ENCODE measurements at regions of chr12 and their contacts with region 1.

Region 1: GRCh38 chr12:21697904-21698630 is 40.4 kb upstream of the LDHB start:
- DNase-seq: peak; percentile 37
- ATAC-seq: no peak
- H3K4me3 ChIP-seq: no peak overlapping the region
- H3K4me3 Mint-ChIP-seq: no peak overlapping the region
- H3K27ac ChIP-seq: no peak overlapping the region
- H3K27ac Mint-ChIP-seq: no peak overlapping the region
- H3K4me1 ChIP-seq: no peaks in the 10 kb centered on the region
- H3K4me1 Mint-ChIP-seq: no peaks in the 10 kb centered on the region
- H3K27me3 ChIP-seq: no peaks in the 10 kb centered on the region
- H3K27me3 Mint-ChIP-seq: peaks cover 3% of the 10 kb centered on the region
- CTCF ChIP-seq: peak; percentile 77

Region 2: DNA sequence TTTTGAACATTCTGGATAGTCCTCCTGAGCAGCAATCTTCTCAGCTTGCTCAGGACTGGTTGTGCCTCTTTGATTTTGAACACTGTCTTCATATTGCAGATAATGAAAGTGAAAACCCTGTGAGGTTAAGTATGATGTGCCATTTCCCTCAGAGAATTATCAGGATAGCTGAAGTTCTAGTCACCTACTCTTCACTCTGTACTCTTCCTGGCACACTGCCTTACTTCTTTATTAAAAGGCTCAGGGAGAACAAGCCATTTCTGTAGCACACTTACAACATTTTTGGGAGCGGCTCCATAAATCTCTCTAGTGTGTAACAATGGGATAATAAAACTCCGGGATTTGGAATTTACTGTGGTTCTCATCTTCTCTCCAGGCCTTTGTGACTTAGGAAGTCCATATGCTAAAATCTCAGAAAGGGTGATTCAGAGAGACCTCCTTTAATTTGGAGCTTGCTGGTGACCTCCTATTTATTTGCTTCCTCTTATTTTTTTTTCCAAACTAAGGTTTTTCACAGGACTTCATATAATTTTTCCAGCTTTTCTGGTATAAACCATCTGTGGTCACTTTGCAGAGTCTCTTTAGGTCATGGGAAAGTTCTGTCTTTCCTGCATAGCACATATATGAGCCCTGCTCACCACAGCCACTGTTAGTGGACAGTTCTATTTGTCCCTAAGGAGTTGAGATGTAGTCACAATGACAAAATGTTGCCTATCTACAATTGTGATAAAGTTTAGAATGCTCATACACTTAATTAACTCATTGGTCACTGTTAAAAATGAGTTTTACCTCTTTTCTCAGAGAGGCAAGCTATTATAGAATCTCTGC is 13.1 kb after region 1 on chr12:
- CTCF ChIA-PET with region 1: interaction called, 11 read pairs
- POLR2A ChIA-PET with region 1: no interaction called
- intact Hi-C with region 1: no loop called
- DNase-seq: no peak
- ATAC-seq: no peak
- H3K4me3 ChIP-seq: no peak overlapping the region
- H3K4me3 Mint-ChIP-seq: no peak overlapping the region
- H3K27ac ChIP-seq: no peak overlapping the region
- H3K27ac Mint-ChIP-seq: no peak overlapping the region
- H3K4me1 ChIP-seq: no peaks in the 10 kb centered on the region
- H3K4me1 Mint-ChIP-seq: no peaks in the 10 kb centered on the region
- H3K27me3 ChIP-seq: peaks cover 0 to 4% (median 0%) of the 10 kb centered on the region in 4 experiments
- H3K27me3 Mint-ChIP-seq: peaks cover 13% of the 10 kb centered on the region
- CTCF ChIP-seq: no peak

Region 3: GRCh38 chr12:21831791-21832344 is 133.8 kb after region 1 on chr12:
- CTCF ChIA-PET with region 1: no interaction called
- POLR2A ChIA-PET with region 1: no interaction called
- intact Hi-C with region 1: no loop called
- DNase-seq: no peak
- ATAC-seq: no peak
- H3K4me3 ChIP-seq: no peak overlapping the region
- H3K4me3 Mint-ChIP-seq: no peak overlapping the region
- H3K27ac ChIP-seq: no peak overlapping the region
- H3K27ac Mint-ChIP-seq: no peak overlapping the region
- H3K4me1 ChIP-seq: no peaks in the 10 kb centered on the region
- H3K4me1 Mint-ChIP-seq: no peaks in the 10 kb centered on the region
- H3K27me3 ChIP-seq: no peaks in the 10 kb centered on the region
- H3K27me3 Mint-ChIP-seq: no peaks in the 10 kb centered on the region
- CTCF ChIP-seq: no peak

Region 4: GRCh38 chr12:22018860-22019259 is 320.8 kb after region 1 on chr12:
- CTCF ChIA-PET with region 1: interaction called, 4 read pairs
- POLR2A ChIA-PET with region 1: no interaction called
- intact Hi-C with region 1: loop called (anchors 10 kb)
- DNase-seq: no peak
- ATAC-seq: no peak
- H3K4me3 ChIP-seq: no peak overlapping the region
- H3K4me3 Mint-ChIP-seq: no peak overlapping the region
- H3K27ac ChIP-seq: no peak overlapping the region
- H3K27ac Mint-ChIP-seq: no peak overlapping the region
- H3K4me1 ChIP-seq: no peaks in the 10 kb centered on the region
- H3K4me1 Mint-ChIP-seq: no peaks in the 10 kb centered on the region
- H3K27me3 ChIP-seq: no peaks in the 10 kb centered on the region
- H3K27me3 Mint-ChIP-seq: peaks cover 13% of the 10 kb centered on the region
- CTCF ChIP-seq: peak; percentile 46

Region 5: GRCh38 chr12:22562036-22563028 is 864.3 kb after region 1 on chr12:
- CTCF ChIA-PET with region 1: no interaction called
- POLR2A ChIA-PET with region 1: no interaction called
- intact Hi-C with region 1: no loop called
- DNase-seq: no peak
- ATAC-seq: no peak
- H3K4me3 ChIP-seq: no peak overlapping the region
- H3K4me3 Mint-ChIP-seq: no peak overlapping the region
- H3K27ac ChIP-seq: no peak overlapping the region
- H3K27ac Mint-ChIP-seq: no peak overlapping the region
- H3K4me1 ChIP-seq: no peaks in the 10 kb centered on the region
- H3K4me1 Mint-ChIP-seq: no peaks in the 10 kb centered on the region
- H3K27me3 ChIP-seq: no peaks in the 10 kb centered on the region
- H3K27me3 Mint-ChIP-seq: peaks cover 26% of the 10 kb centered on the region
- CTCF ChIP-seq: no peak